CD4-positive, alpha-beta memory T cell (primary cell): ENCODE measurements at regions of chr13 and their contacts with region 1.

Region 1: DNA sequence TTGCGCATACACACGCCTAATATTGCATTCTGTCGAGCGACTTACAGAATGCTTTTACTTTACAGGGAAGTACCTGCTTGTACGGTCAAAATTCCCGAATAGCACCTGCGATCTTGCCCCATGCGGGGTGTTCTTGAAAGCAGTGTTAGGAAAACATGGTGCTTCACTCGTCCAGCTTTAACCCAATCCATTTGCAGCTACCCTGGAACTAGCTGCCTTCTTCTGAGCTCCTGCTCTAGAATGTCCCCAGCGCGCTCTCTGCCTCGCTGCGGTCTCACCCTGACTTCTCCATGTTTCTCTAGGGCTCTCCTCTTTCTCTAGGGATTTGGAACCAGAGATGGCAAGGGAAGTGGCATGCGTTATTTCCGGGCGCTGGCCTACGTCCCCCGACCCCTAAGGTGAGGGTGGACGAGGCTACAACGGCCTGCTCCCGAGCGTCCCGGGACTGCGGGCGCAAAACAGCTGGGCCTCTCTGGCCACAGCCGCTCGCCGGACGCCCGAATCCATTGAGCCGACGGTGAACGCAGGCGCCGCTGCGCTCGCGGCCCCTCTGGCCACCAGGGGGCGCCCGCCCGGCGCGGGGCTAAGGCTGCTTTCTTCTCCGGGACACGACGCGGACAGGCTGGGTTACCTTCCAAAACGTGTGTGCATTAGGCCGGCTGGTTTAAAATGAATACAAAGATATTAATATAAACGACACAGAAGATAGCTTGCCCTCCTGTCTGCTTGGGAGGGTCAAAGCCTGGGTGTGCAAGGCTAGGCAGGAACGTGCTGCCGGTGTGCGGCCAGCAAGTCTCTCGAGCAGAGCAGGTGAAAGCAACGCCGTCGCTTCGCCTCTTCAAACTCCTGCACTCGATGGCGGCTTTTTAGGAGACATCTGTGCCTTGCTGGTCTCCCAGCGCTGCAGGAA is 1.8 kb upstream of the SPRY2 start:
- DNase-seq: peak in 4 of 5 donors; percentile 51 to 61 (median 55)
- H3K4me3 ChIP-seq: peak overlapping the region in 1 of 2 donors; percentile 6
- H3K4me3 Mint-ChIP-seq: peak overlapping the region; percentile 55 to 85 (median 78)
- H3K27ac ChIP-seq: no peak overlapping the region
- H3K27ac Mint-ChIP-seq: no peak overlapping the region
- H3K4me1 ChIP-seq: peaks cover 38% of the 10 kb centered on the region
- H3K4me1 Mint-ChIP-seq: peaks cover 9 to 28% (median 19%) of the 10 kb centered on the region in 4 donors
- H3K27me3 ChIP-seq: peaks cover 21% of the 10 kb centered on the region
- H3K27me3 Mint-ChIP-seq: peaks cover 20% of the 10 kb centered on the region in 2 donors

Region 2: GRCh38 chr13:80329250-80329649 is 13.5 kb before region 1 on chr13:
- CTCF ChIA-PET with region 1: interaction called, 10 read pairs
- POLR2A ChIA-PET with region 1: no interaction called
- intact Hi-C with region 1: no loop called
- DNase-seq: no peak
- H3K4me3 ChIP-seq: no peak overlapping the region
- H3K4me3 Mint-ChIP-seq: no peak overlapping the region
- H3K27ac ChIP-seq: no peak overlapping the region
- H3K27ac Mint-ChIP-seq: no peak overlapping the region
- H3K4me1 ChIP-seq: no peaks in the 10 kb centered on the region
- H3K4me1 Mint-ChIP-seq: no peaks in the 10 kb centered on the region
- H3K27me3 ChIP-seq: no peaks in the 10 kb centered on the region
- H3K27me3 Mint-ChIP-seq: peaks cover 5% of the 10 kb centered on the region in 2 donors

Region 3: DNA sequence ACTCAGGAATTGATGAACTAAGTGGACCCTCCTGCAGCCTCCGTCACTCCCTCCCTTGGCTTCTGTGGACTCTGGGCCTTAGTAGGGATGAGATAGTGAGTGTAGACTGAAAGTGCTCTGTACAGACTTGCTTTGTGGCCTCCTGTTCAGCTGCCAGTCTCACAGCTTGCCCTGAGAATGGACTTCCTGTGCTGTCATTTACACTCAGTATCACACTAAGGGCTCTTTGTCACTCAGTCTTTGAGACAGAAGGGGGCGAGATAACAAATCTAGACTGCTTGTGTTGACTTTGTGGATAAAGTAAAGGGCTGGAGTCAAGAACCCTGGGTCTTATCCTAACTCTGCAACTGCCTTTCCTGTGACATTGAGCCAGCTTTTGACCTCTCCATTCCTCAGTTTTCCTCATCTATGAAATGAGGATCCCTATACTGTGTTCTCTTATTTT is 19.2 kb after region 1 on chr13:
- CTCF ChIA-PET with region 1: interaction called, 24 read pairs
- POLR2A ChIA-PET with region 1: no interaction called
- intact Hi-C with region 1: no loop called
- DNase-seq: no peak
- H3K4me3 ChIP-seq: no peak overlapping the region
- H3K4me3 Mint-ChIP-seq: no peak overlapping the region
- H3K27ac ChIP-seq: no peak overlapping the region
- H3K27ac Mint-ChIP-seq: no peak overlapping the region
- H3K4me1 ChIP-seq: no peaks in the 10 kb centered on the region
- H3K4me1 Mint-ChIP-seq: peaks cover 0 to 3% (median 0%) of the 10 kb centered on the region in 4 donors
- H3K27me3 ChIP-seq: no peaks in the 10 kb centered on the region
- H3K27me3 Mint-ChIP-seq: peaks cover 0 to 4% of the 10 kb centered on the region in 2 donors